ENCODE measurements at regions of chr20 and their contacts with region 1.

Region 1: GRCh38 chr20:5529331-5530148 is 212.8 kb upstream of the PROKR2 start:
- DNase-seq: peak; percentile 73
- H3K4me3 ChIP-seq: peak overlapping the region; percentile 28 to 36
- H3K27ac ChIP-seq: no peak overlapping the region; a peak in 1 of 4 replicates
- H3K4me1 ChIP-seq: peaks cover 0 to 2% of the 10 kb centered on the region in 2 experiments; a peak in 1 of 4 replicates
- H3K27me3 ChIP-seq: no peaks in the 10 kb centered on the region
- CTCF ChIP-seq: peak; percentile 94
- EP300 ChIP-seq: no peak; a peak in 1 of 4 replicates
- RAD21 ChIP-seq: peak; percentile 84

Region 2: DNA sequence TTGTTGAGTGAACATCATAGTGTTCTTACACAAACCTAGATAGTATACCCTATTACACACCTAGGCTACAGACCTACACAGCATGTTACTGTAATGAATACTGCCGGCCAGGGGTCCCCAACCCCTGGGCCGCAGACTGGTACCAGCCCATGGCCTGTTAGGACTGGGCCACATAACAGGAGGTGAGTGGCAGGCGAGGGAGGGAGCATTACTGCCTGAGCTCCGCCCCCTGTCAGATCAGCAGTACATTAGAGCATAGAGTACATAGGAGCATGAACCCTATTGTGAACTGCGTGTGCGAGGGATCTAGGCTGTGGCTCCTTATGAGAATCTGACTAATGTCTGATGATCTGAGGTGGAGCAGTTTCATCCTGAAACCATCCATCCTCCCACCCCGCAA is 681.5 kb before region 1 on chr20:
- CTCF ChIA-PET with region 1: no interaction called
- POLR2A ChIA-PET with region 1: no interaction called
- DNase-seq: no peak
- H3K4me3 ChIP-seq: no peak overlapping the region
- H3K27ac ChIP-seq: no peak overlapping the region
- H3K4me1 ChIP-seq: no peaks in the 10 kb centered on the region
- H3K27me3 ChIP-seq: no peaks in the 10 kb centered on the region
- CTCF ChIP-seq: no peak
- EP300 ChIP-seq: no peak
- RAD21 ChIP-seq: no peak

Region 3: GRCh38 chr20:5513975-5514516 is 15.5 kb before region 1 on chr20:
- CTCF ChIA-PET with region 1: interaction called, 18 read pairs
- POLR2A ChIA-PET with region 1: no interaction called
- DNase-seq: no peak
- H3K4me3 ChIP-seq: no peak overlapping the region
- H3K27ac ChIP-seq: no peak overlapping the region
- H3K4me1 ChIP-seq: no peaks in the 10 kb centered on the region
- H3K27me3 ChIP-seq: no peaks in the 10 kb centered on the region
- CTCF ChIP-seq: no peak
- EP300 ChIP-seq: no peak
- RAD21 ChIP-seq: no peak

Region 4: DNA sequence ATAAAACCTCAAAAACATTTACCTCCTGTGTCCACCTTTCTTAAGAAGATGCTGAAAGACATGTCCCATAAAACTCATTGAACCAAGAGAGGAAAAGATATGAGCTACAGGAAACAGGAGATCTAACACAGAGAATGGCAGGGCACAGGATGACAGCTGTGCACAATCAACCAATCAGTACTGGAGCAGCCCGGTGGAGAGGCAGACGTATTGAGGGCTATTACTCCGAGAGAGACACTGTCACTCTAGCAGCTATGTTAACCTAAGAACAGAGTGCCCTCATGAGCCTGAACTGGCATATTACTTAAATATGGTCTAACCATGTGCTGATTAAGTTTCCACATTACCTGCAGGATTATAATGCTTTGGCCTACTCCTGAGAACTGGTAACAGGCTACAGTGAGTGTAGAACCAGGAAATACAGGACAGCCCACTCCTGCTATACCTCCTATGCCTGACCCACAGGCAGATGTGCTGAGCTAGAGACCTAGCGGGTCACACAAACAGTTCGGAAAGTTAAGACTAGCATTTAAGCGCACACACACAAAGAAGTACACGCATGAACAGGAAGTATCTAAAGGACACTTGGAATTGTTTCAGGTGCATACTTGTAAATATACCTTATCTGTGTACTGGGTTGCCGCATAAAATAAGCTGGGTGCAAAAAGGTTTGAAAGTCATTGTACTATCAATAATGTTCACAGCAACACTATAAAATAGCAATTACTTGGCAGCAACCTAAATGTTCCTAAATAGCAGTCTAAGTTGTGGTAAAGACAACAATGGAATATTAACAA is 21.4 kb after region 1 on chr20:
- CTCF ChIA-PET with region 1: interaction called, 32 read pairs
- POLR2A ChIA-PET with region 1: no interaction called
- DNase-seq: peak; percentile 18
- H3K4me3 ChIP-seq: no peak overlapping the region
- H3K27ac ChIP-seq: no peak overlapping the region
- H3K4me1 ChIP-seq: peaks cover 0 to 6% of the 10 kb centered on the region in 2 experiments; a peak in 2 of 4 replicates
- H3K27me3 ChIP-seq: no peaks in the 10 kb centered on the region
- CTCF ChIP-seq: no peak
- EP300 ChIP-seq: no peak
- RAD21 ChIP-seq: no peak

Region 5: GRCh38 chr20:5569021-5569420 is 39.5 kb after region 1 on chr20:
- CTCF ChIA-PET with region 1: interaction called, 25 read pairs
- POLR2A ChIA-PET with region 1: no interaction called
- DNase-seq: peak; percentile 52
- H3K4me3 ChIP-seq: no peak overlapping the region
- H3K27ac ChIP-seq: no peak overlapping the region
- H3K4me1 ChIP-seq: no peaks in the 10 kb centered on the region
- H3K27me3 ChIP-seq: no peaks in the 10 kb centered on the region
- CTCF ChIP-seq: peak; percentile 68
- EP300 ChIP-seq: no peak
- RAD21 ChIP-seq: peak; percentile 87

Region 6: DNA sequence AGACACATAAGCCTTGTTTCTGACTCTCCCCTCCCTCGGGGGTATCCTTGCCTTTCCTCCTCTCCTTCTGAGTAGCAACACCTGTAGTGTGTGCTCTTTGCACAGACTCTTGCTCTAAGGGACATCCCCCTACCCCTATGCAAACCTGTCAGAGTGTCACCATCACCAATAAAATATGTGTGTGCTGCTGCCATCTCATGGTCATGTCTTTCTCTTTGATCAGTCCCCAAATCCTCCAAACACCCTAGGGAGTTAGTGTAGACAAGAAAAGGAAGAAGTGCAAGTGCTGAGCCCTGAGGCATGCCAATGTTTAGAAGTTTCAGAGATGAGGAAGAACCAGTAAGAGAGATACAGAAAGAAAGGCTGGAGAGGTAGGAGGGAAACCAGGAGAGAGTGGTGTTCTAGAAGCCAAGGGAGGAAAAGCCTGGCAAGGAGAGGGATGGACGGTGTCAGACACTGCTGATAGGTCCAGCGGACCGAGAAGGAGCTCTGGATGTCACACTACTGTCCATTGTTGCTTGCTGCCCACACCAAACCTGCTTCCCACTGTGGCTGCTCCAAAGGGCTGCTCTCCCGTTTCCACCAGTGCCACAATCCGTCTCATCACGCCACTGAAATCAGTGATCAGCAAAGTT is 404.4 kb after region 1 on chr20:
- CTCF ChIA-PET with region 1: interaction called, 10 read pairs
- POLR2A ChIA-PET with region 1: no interaction called
- DNase-seq: peak; percentile 48
- H3K4me3 ChIP-seq: no peak overlapping the region
- H3K27ac ChIP-seq: no peak overlapping the region
- H3K4me1 ChIP-seq: peaks cover 0 to 9% of the 10 kb centered on the region in 2 experiments; a peak in 1 of 4 replicates
- H3K27me3 ChIP-seq: peaks cover 8% of the 10 kb centered on the region; the same call in 1 of the 2 replicates
- CTCF ChIP-seq: peak; percentile 48
- EP300 ChIP-seq: no peak
- RAD21 ChIP-seq: peak; percentile 74

Region 7: GRCh38 chr20:6081236-6081635 is 551.7 kb after region 1 on chr20:
- CTCF ChIA-PET with region 1: interaction called, 84 read pairs
- POLR2A ChIA-PET with region 1: no interaction called
- DNase-seq: no peak
- H3K4me3 ChIP-seq: no peak overlapping the region
- H3K27ac ChIP-seq: no peak overlapping the region
- H3K4me1 ChIP-seq: no peaks in the 10 kb centered on the region
- H3K27me3 ChIP-seq: no peaks in the 10 kb centered on the region
- CTCF ChIP-seq: no peak
- EP300 ChIP-seq: no peak
- RAD21 ChIP-seq: no peak